GM12878 (cell line): ENCODE measurements at regions of chr4 and their contacts with region 1.

Region 1: DNA sequence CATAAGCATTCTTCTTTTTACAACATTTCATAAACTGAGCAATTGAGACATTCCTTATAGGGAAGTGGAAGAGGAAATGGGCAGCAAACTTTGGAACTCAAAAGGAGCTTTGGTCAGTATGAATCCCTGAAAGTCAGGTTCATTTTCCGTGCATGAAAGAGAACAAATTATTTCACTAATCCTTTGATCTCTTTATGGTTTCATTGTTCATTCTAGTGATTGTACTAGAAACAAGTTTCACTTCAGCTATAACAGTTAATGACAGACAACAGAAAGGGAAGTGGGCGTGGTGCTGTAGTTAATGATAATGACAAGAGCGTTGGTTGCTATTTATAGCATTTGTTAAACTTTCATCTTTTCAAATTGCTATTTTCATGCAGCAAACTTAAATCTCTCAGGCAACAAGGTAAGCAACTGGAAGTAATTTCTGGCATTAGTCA is 98.3 kb downstream of the AREG start:
- DNase-seq: peak; percentile 9
- ATAC-seq: peak; percentile 92
- H3K4me3 ChIP-seq: no peak overlapping the region
- H3K27ac ChIP-seq: no peak overlapping the region
- H3K4me1 ChIP-seq: no peaks in the 10 kb centered on the region
- H3K27me3 ChIP-seq: no peaks in the 10 kb centered on the region; a peak in 1 of 4 replicates
- CTCF ChIP-seq: no peak
- EP300 ChIP-seq: peak; percentile 54 to 66; a peak in 2 of 4 replicates
- POLR2A ChIP-seq: no peak
- RAD21 ChIP-seq: no peak

Region 2: DNA sequence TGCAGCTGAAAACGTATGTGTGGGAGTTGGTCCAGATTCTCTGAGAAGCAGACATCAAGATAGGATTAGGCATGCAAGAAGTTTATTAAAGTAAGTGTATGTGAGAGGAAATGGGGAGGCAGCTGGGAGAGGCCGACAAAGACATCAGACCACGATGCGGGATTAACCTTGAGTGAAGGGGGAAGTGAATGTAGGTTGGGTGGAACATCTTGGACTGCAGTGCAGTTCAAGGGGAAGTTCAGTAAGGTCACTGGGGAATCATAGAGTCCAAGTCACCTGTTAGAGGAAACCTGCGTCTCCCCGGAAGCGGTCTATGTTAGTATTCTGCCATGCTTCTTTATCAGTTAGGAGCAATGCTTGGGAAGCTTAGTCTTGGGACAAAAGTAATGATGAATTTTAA is 780.8 kb before region 1 on chr4:
- CTCF ChIA-PET with region 1: no interaction called
- POLR2A ChIA-PET with region 1: no interaction called
- RAD21 ChIA-PET with region 1: no interaction called
- SMC1A ChIA-PET with region 1: no interaction called
- in situ Hi-C with region 1: no loop called
- intact Hi-C with region 1: no loop called
- DNase-seq: peak; percentile 11
- ATAC-seq: no peak; the same call in 2 of the 3 replicates
- H3K4me3 ChIP-seq: no peak overlapping the region
- H3K27ac ChIP-seq: no peak overlapping the region
- H3K4me1 ChIP-seq: no peaks in the 10 kb centered on the region
- H3K27me3 ChIP-seq: no peaks in the 10 kb centered on the region
- CTCF ChIP-seq: no peak
- EP300 ChIP-seq: no peak
- POLR2A ChIP-seq: no peak
- RAD21 ChIP-seq: no peak

Region 3: DNA sequence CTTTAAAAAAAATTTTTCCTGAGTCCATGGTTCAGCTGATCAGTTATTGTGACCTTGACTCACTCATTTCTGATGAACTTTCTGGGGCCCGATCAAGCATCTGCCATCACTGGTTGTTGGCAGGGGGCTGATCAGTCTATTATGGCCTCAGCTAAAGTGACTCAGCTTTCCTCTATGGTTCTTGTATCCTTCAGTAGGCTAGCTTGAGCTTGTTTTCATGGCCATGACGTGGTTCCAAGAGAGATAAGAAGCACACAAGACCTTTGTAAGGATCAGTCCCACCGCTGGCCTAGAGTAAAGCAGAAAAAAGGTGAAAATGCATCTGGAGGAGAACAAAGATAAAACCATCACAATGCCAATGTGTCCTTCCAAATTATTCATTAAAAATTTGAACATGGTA is 264.8 kb before region 1 on chr4:
- CTCF ChIA-PET with region 1: no interaction called
- POLR2A ChIA-PET with region 1: no interaction called
- RAD21 ChIA-PET with region 1: no interaction called
- SMC1A ChIA-PET with region 1: no interaction called
- in situ Hi-C with region 1: no loop called
- intact Hi-C with region 1: no loop called
- DNase-seq: no peak
- ATAC-seq: no peak
- H3K4me3 ChIP-seq: no peak overlapping the region
- H3K27ac ChIP-seq: no peak overlapping the region
- H3K4me1 ChIP-seq: no peaks in the 10 kb centered on the region
- H3K27me3 ChIP-seq: no peaks in the 10 kb centered on the region
- CTCF ChIP-seq: no peak
- EP300 ChIP-seq: no peak
- POLR2A ChIP-seq: no peak
- RAD21 ChIP-seq: no peak

Region 4: DNA sequence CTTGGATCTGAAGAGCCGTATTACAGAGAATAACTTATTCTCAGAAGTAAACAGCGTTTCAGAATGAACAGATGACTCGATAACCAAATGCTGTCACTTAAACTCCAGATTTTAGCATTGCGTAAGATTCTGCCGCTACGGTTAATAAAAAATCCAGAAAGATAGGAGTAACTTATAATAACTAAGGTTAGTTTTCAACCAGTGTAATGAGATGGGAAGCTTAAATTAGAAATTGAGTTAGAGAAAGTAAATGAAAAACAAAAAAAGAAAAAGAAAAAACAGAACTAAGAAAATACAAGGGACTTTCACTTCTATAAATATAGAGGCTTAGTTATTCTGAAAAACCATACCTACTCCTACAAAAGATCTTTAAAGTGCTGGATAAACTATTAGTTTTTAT is 376.5 kb after region 1 on chr4:
- CTCF ChIA-PET with region 1: no interaction called
- POLR2A ChIA-PET with region 1: no interaction called
- RAD21 ChIA-PET with region 1: no interaction called
- SMC1A ChIA-PET with region 1: no interaction called
- in situ Hi-C with region 1: no loop called
- intact Hi-C with region 1: loop called (anchors 10 kb)
- DNase-seq: no peak
- ATAC-seq: peak; percentile 73
- H3K4me3 ChIP-seq: peak overlapping the region; percentile 44
- H3K27ac ChIP-seq: peak overlapping the region; percentile 59
- H3K4me1 ChIP-seq: peaks cover 28% of the 10 kb centered on the region
- H3K27me3 ChIP-seq: no peaks in the 10 kb centered on the region
- CTCF ChIP-seq: no peak
- EP300 ChIP-seq: peak in 1 of 2 experiments; percentile 23; a peak in 1 of 4 replicates
- POLR2A ChIP-seq: no peak
- RAD21 ChIP-seq: no peak